HepG2 (cell line): ENCODE measurements at regions of chr22 and their contacts with region 1.

Region 1: GRCh38 chr22:41381329-41382097 is at the start of gene TEF:
- DNase-seq: peak; percentile 97
- ATAC-seq: peak; percentile 90
- H3K4me3 ChIP-seq: peak within 1 kb of the TSS; percentile 76 to 84 (median 80)
- H3K27ac ChIP-seq: peak within 1 kb of the TSS; percentile 98
- H3K4me1 ChIP-seq: peaks cover 24% of the 10 kb centered on the region
- H3K27me3 ChIP-seq: no peaks in the 10 kb centered on the region; a peak in 1 of 5 replicates
- CTCF ChIP-seq: no peak
- EP300 ChIP-seq: 0 out of 4 replicates have a peak, but pooled peaks of 1 of the 2 experiments have one; percentile 29
- POLR2A ChIP-seq: no peak
- RAD21 ChIP-seq: no peak
- total RNA-seq, gene TEF: 7.6 and 8.2 TPM in 2 replicates

Region 2: DNA sequence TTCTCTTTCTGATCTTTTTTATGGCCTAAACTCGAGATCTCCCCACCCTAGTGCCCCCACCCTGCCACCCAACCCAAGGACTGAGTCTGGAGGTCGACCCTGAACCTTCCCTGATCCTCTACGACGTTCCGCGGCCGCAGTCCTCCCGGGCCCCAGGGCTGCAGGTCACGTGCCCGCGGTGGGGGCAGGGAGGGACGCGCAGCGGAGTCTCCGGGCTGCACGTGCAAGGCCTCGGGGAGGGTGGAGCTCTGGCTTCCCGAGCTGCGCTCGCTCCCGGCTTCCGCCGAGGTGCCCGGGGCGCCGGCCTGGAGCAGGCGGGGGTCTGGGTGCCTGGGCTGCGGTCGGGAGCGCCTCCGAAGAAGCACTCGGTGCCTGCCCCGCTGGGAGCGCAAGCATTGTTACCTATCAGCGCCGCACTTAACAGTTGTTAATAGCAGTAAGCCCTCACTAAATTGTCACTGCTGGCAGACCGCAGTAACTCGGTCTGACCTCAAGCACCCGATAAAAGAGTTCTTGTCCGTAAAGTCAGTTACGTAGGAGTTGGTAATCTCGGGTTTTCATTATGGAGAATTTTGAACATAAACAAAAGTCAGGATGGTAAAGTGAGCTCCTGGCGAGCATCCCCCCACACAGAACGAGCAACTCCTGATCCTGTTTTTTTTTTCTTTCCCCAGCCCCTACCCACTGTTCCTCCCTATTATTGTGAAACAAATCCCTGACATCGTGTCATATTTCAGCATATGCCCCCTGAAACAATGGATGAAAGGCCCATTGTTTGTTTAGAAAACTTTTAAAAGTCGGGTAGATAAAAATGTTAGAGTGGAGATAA is 358.8 kb before region 1 on chr22:
- CTCF ChIA-PET with region 1: no interaction called
- POLR2A ChIA-PET with region 1: interaction called, 16 read pairs
- in situ Hi-C with region 1: no loop called
- intact Hi-C with region 1: no loop called
- DNase-seq: peak; percentile 79
- ATAC-seq: peak; percentile 73
- H3K4me3 ChIP-seq: peak overlapping the region; percentile 66 to 88 (median 75)
- H3K27ac ChIP-seq: peak overlapping the region; percentile 75
- H3K4me1 ChIP-seq: peaks cover 33% of the 10 kb centered on the region
- H3K27me3 ChIP-seq: peaks cover 2 to 9% of the 10 kb centered on the region in 2 experiments; a peak in 2 of 5 replicates
- CTCF ChIP-seq: no peak; the same call in none of the 2 replicates
- EP300 ChIP-seq: peak in 1 of 2 experiments; percentile 53; a peak in 2 of 4 replicates
- POLR2A ChIP-seq: no peak; a peak in 1 of 4 replicates
- RAD21 ChIP-seq: no peak

Region 3: GRCh38 chr22:41308054-41308453 is 73.5 kb before region 1 on chr22:
- CTCF ChIA-PET with region 1: no interaction called
- POLR2A ChIA-PET with region 1: interaction called, 21 read pairs
- in situ Hi-C with region 1: no loop called
- intact Hi-C with region 1: no loop called
- DNase-seq: no peak
- ATAC-seq: peak; percentile 60
- H3K4me3 ChIP-seq: peak overlapping the region in 1 of 3 experiments; percentile 0; a peak in 1 of 6 replicates
- H3K27ac ChIP-seq: peak overlapping the region; percentile 69
- H3K4me1 ChIP-seq: peaks cover 63% of the 10 kb centered on the region
- H3K27me3 ChIP-seq: no peaks in the 10 kb centered on the region
- CTCF ChIP-seq: no peak
- EP300 ChIP-seq: no peak
- POLR2A ChIP-seq: no peak
- RAD21 ChIP-seq: no peak

Region 4: GRCh38 chr22:41397143-41397811 is 15.8 kb after region 1 on chr22:
- CTCF ChIA-PET with region 1: no interaction called
- POLR2A ChIA-PET with region 1: interaction called, 60 read pairs
- in situ Hi-C with region 1: no loop called
- intact Hi-C with region 1: no loop called
- DNase-seq: peak; percentile 91
- ATAC-seq: peak; percentile 96
- H3K4me3 ChIP-seq: peak overlapping the region; percentile 21 to 67 (median 41)
- H3K27ac ChIP-seq: peak overlapping the region; percentile 92
- H3K4me1 ChIP-seq: peaks cover 64% of the 10 kb centered on the region
- H3K27me3 ChIP-seq: no peaks in the 10 kb centered on the region
- CTCF ChIP-seq: no peak
- EP300 ChIP-seq: peak; percentile 54 to 75; a peak in 3 of 4 replicates
- POLR2A ChIP-seq: peak; percentile 36 to 58; a peak in 3 of 4 replicates
- RAD21 ChIP-seq: no peak

Region 5: DNA sequence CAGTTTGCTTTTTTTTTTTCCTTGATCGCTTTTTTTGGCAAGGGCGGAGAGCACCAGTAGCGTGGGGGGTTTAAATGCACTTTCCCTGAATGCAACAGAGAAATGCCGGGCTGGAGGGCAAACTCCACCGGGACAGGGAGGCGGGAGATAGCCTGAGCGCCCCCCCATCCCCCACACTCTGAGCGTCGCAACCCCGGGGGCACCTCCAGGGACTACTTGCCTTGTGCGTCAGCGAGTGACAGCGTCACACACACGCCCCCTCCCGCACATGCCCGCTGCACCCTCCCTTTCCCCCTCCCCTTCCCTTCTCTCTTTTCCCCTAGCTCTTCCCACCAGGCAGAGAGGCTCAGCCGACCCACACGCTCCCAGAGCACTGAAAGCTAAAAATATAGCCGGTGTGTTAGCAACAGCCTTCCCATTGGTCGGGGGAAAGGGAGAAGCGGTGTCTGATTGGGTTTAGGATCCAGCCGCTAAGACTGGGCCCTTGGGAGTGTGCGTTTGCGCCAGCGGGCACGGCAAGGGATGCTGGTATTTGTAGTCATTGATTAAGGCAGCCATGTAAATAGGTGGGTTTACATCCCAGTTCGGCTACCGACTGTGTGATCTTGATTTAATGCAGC is 66.8 kb after region 1 on chr22:
- CTCF ChIA-PET with region 1: no interaction called
- POLR2A ChIA-PET with region 1: interaction called, 60 read pairs
- in situ Hi-C with region 1: no loop called
- intact Hi-C with region 1: no loop called
- DNase-seq: peak; percentile 99
- ATAC-seq: peak; percentile 80
- H3K4me3 ChIP-seq: peak overlapping the region; percentile 89 to 97 (median 90)
- H3K27ac ChIP-seq: peak overlapping the region; percentile 100
- H3K4me1 ChIP-seq: peaks cover 16% of the 10 kb centered on the region
- H3K27me3 ChIP-seq: no peaks in the 10 kb centered on the region; a peak in 1 of 5 replicates
- CTCF ChIP-seq: peak; percentile 34; the same call in 1 of the 2 replicates
- EP300 ChIP-seq: peak; percentile 89
- POLR2A ChIP-seq: peak; percentile 92 to 93
- RAD21 ChIP-seq: no peak; the same call in 1 of the 2 replicates

Region 6: GRCh38 chr22:41589391-41590241 is 208.1 kb after region 1 on chr22 and contains the start of gene PMM1:
- CTCF ChIA-PET with region 1: no interaction called
- POLR2A ChIA-PET with region 1: interaction called, 21 read pairs
- in situ Hi-C with region 1: no loop called
- intact Hi-C with region 1: no loop called
- DNase-seq: peak; percentile 98
- ATAC-seq: peak; percentile 85
- H3K4me3 ChIP-seq: peak within 1 kb of the TSS; percentile 77 to 99 (median 95)
- H3K27ac ChIP-seq: peak within 1 kb of the TSS; percentile 78
- H3K4me1 ChIP-seq: peaks cover 25% of the 10 kb centered on the region
- H3K27me3 ChIP-seq: no peaks in the 10 kb centered on the region
- CTCF ChIP-seq: peak; percentile 18; the same call in 1 of the 2 replicates
- EP300 ChIP-seq: no peak
- POLR2A ChIP-seq: peak; percentile 86 to 94
- RAD21 ChIP-seq: no peak; the same call in 1 of the 2 replicates
- total RNA-seq, gene PMM1: 17.8 and 23.0 TPM in 2 replicates